Spleen (tissue), 13 donors: ENCODE measurements at regions of chr1 and their contacts with region 1.

Region 1: GRCh38 chr1:168439456-168440375 is 104.1 kb downstream of the XCL2 start:
- DNase-seq: no peak
- H3K4me3 ChIP-seq: peak overlapping the region in 1 of 8 donors; percentile 51
- H3K27ac ChIP-seq: peak overlapping the region in 6 of 8 donors; percentile 8 to 57 (median 36)
- H3K4me1 ChIP-seq: peaks cover 0 to 34% (median 13%) of the 10 kb centered on the region in 6 donors
- H3K27me3 ChIP-seq: no peaks in the 10 kb centered on the region
- CTCF ChIP-seq: peak; percentile 54 to 84 (median 72)
- POLR2A ChIP-seq: no peak

Region 2: DNA sequence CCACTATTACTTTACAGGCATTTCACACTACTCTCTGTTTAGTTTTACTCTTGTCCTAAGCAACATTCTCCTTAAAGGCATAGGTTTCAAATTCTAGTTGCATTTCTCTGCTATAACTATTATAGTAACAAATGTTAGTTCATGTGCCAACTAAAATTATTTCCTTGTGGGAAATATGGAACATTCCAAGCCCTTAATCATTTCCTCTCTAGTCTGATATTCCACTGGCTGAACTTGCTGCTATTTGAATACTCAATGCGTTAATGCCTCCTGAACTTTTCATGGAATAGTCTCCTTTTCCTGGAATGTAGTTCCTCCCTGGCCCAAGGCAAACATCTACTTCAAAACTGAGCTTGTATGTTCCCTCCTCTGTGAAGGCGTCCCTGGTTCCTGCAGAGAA is 178.3 kb before region 1 on chr1:
- intact Hi-C with region 1: no loop called
- DNase-seq: no peak
- H3K4me3 ChIP-seq: no peak overlapping the region
- H3K27ac ChIP-seq: peak overlapping the region in 3 of 8 donors; percentile 8 to 52 (median 36)
- H3K4me1 ChIP-seq: peaks cover 0 to 24% (median 6%) of the 10 kb centered on the region in 6 donors
- H3K27me3 ChIP-seq: no peaks in the 10 kb centered on the region
- CTCF ChIP-seq: no peak
- POLR2A ChIP-seq: no peak

Region 3: GRCh38 chr1:168572633-168573032 is 132.9 kb after region 1 on chr1:
- intact Hi-C with region 1: loop called (anchors 5 kb)
- DNase-seq: no peak
- H3K4me3 ChIP-seq: no peak overlapping the region
- H3K27ac ChIP-seq: no peak overlapping the region
- H3K4me1 ChIP-seq: peaks cover 0 to 3% (median 0%) of the 10 kb centered on the region in 6 donors
- H3K27me3 ChIP-seq: peaks cover 0 to 6% (median 0%) of the 10 kb centered on the region in 7 donors
- CTCF ChIP-seq: no peak
- POLR2A ChIP-seq: no peak

Region 4: GRCh38 chr1:168728473-168729404 is 289.0 kb after region 1 on chr1 and contains the start of gene DPT:
- intact Hi-C with region 1: no loop called
- DNase-seq: no peak
- H3K4me3 ChIP-seq: no peak within 1 kb of the TSS
- H3K27ac ChIP-seq: no peak within 1 kb of the TSS
- H3K4me1 ChIP-seq: no peaks in the 10 kb centered on the region
- H3K27me3 ChIP-seq: peaks cover 0 to 13% (median 0%) of the 10 kb centered on the region in 7 donors
- CTCF ChIP-seq: no peak
- POLR2A ChIP-seq: no peak
- total RNA-seq, gene DPT: 0.37 to 0.44 TPM in 2 of 7 donors, not detected in the others

Region 5: GRCh38 chr1:169367486-169368405 is 928.0 kb after region 1 on chr1 and contains the starts of genes BLZF1 and NME7:
- intact Hi-C with region 1: loop called (anchors 10 kb)
- DNase-seq: peak; percentile 99
- H3K4me3 ChIP-seq: peak within 1 kb of the TSS; percentile 50 to 90 (median 76)
- H3K27ac ChIP-seq: peak within 1 kb of the TSS; percentile 17 to 92 (median 84)
- H3K4me1 ChIP-seq: peaks cover 12 to 70% (median 41%) of the 10 kb centered on the region in 6 donors
- H3K27me3 ChIP-seq: no peaks in the 10 kb centered on the region
- CTCF ChIP-seq: peak in 1 of 11 experiments; percentile 35
- POLR2A ChIP-seq: no peak
- total RNA-seq, gene BLZF1: 16.9 to 33.8 (median 23.0) TPM
- total RNA-seq, gene NME7: 7.6 to 22.0 (median 13.2) TPM